HEK293T (cell line): ENCODE measurements at regions of chr10 and their contacts with region 1.

Region 1: GRCh38 chr10:100535715-100536353 is at the start of gene HIF1AN:
- DNase-seq: peak; percentile 95

Region 2: GRCh38 chr10:100551196-100551595 is 15.4 kb after region 1 on chr10:
- CTCF ChIA-PET with region 1: no interaction called
- POLR2A ChIA-PET with region 1: interaction called, 14 read pairs
- DNase-seq: no peak